Activated T-helper 1 cell treated with anti-CD3 and anti-CD28 coated beads, Interleukin-12 subunit alpha, Interleukin-12 subunit beta, Interleukin-2, Interleukin-4 antibody, amounts not matched to agents 30 ng/mL and 10 ng/mL and 1 ng/mL, durations not matched to agents 14 hours and 24 hours and 36 hours (primary cell): ENCODE measurements at regions of chr3 and their contacts with region 1.

Region 1: DNA sequence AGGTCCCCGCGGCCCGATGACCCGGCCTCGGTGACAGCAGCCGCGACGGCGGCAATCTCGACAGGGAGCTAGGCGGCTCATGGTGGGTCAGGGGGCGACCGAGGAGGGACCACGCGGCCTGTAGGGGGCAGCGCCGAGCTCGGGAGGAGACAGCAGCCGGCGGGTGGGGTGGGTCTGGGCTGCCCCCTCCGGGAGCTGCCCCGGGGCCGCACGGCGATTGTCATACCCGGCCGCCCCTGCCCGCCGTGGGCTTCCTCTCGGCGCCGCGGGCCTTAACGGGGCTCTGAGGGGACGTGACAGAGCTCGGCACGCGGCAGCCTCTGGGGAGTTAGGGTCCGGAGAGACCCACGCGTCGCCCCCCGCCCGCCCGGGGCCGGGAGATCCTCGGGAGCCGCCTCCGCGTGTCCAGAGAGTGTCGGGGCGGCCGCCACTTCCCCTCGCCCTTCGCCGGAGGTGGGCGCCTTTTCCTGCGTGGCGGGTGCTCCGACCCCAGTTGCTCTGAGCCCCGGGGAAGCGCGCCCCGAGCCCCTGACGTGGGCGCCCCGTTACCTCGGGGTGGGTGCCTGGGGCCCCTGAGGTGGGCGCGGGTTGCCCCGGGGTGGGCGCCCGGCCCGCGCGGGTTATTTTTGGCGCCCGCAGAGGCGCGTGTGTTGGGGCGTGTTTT is 539 bp upstream of the PLCL2 start:
- DNase-seq: peak; percentile 45
- H3K4me3 Mint-ChIP-seq: peak overlapping the region; percentile 94
- H3K27ac Mint-ChIP-seq: peak overlapping the region; percentile 96
- H3K4me1 Mint-ChIP-seq: peaks cover 38% of the 10 kb centered on the region
- H3K27me3 Mint-ChIP-seq: peaks cover 4% of the 10 kb centered on the region

Region 2: GRCh38 chr3:16290007-16290826 is 594.0 kb before region 1 on chr3:
- intact Hi-C with region 1: loop called (anchors 5 kb)
- DNase-seq: no peak
- H3K4me3 Mint-ChIP-seq: peak overlapping the region; percentile 91
- H3K27ac Mint-ChIP-seq: peak overlapping the region; percentile 80
- H3K4me1 Mint-ChIP-seq: peaks cover 80% of the 10 kb centered on the region
- H3K27me3 Mint-ChIP-seq: no peaks in the 10 kb centered on the region

Region 3: DNA sequence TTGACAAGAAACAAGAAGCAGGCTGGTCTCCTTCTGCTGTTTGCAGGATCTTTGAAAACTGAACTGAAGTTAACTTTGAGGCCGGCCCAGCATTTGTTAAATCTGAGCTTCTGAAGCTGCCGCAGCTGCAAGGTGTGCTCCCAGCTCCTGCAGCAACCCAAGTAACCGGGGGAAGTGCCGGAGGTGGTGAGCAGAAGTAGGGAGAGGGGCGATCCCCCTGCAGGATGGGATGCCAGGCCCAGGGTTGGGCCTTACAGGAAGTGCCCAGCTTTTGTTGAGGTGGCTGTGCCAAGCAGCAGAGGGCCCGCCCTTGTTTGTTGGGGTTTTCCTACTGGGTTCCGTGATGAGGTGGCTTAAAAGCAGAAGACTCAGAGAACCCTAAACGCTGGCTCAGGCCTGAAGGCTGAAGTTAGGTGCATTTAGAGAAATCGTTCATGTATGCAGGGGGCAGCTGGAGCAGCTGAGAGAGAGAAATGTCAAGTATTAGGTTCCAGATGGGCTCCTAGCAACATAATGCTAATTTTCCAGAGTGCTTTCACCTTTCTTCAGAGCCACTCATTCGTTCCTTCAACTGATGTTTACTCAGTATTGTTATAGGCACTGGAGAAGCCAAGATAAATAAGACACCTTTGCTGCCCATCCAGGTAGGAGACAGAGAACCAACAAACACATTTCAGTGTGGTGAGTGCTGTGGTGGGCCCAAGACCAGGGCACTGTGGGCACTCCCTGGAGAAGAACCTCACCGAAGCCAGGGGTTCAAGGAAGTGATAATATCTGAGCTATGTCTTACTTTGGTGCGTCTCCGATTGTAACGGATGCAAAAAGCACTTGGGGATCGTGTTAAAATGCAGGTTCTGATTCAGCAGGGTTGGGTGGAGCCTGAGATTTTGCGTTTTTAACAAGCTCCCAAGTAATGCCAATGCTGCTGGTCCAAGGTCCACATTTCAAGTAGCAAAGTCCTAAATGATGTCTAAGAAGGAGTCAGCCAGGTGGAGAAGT is 41.6 kb before region 1 on chr3:
- intact Hi-C with region 1: loop called (anchors 1 kb)
- DNase-seq: peak; percentile 73
- H3K4me3 Mint-ChIP-seq: peak overlapping the region; percentile 77
- H3K27ac Mint-ChIP-seq: peak overlapping the region; percentile 99
- H3K4me1 Mint-ChIP-seq: peaks cover 71% of the 10 kb centered on the region
- H3K27me3 Mint-ChIP-seq: peaks cover 3% of the 10 kb centered on the region

Region 4: DNA sequence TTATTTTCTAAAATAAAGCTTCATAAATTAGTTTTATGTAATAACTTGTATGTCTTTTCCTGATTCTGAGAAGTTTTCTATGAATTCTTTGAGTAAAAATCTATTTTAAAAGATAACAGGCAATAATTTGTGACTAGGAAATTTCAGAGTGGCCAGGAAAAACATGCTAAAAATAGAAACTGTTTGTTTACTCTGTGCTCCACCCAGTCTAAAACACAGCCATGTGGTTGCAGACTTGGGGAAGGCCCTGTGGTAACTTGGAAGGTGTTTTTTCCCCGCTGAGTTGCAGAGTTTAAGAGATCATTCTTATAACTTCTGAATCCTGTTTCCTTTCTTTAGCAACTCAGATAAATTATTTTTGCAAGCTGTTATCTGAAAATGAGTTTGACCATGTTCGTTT is 22.5 kb after region 1 on chr3:
- intact Hi-C with region 1: loop called (anchors 1 kb)
- DNase-seq: no peak
- H3K4me3 Mint-ChIP-seq: peak overlapping the region; percentile 51
- H3K27ac Mint-ChIP-seq: no peak overlapping the region
- H3K4me1 Mint-ChIP-seq: peaks cover 76% of the 10 kb centered on the region
- H3K27me3 Mint-ChIP-seq: no peaks in the 10 kb centered on the region

Region 5: DNA sequence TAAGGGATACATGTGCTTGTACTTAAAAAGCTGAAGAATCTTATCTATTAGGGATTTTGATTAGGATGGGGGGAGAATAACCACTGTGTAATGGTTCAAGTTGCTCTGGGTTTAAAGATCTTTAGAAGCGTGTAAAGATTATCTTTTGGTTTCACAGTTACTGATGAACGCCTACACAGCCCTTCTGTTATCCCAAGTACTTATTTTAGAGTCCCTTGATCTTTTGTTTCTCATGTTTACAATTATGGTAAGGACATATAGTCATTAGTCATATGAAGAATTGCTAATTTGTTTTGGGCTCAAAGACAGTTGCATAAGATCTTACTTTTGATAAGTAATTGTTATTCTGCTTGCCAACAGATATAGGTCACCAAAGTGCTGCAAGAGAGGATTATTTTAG is 160.6 kb after region 1 on chr3:
- intact Hi-C with region 1: loop called (anchors 1 kb)
- DNase-seq: no peak
- H3K4me3 Mint-ChIP-seq: no peak overlapping the region
- H3K27ac Mint-ChIP-seq: peak overlapping the region; percentile 40
- H3K4me1 Mint-ChIP-seq: peaks cover 57% of the 10 kb centered on the region
- H3K27me3 Mint-ChIP-seq: no peaks in the 10 kb centered on the region

Region 6: GRCh38 chr3:17179381-17180210 is 295.4 kb after region 1 on chr3:
- intact Hi-C with region 1: loop called (anchors 1 kb)
- DNase-seq: no peak
- H3K4me3 Mint-ChIP-seq: no peak overlapping the region
- H3K27ac Mint-ChIP-seq: no peak overlapping the region
- H3K4me1 Mint-ChIP-seq: peaks cover 44% of the 10 kb centered on the region
- H3K27me3 Mint-ChIP-seq: peaks cover 12% of the 10 kb centered on the region